Naive thymus-derived CD4-positive, alpha-beta T cell (primary cell): ENCODE measurements at regions of chr3 and their contacts with region 1.

Region 1: GRCh38 chr3:4409415-4409814 is 57.7 kb downstream of the SUMF1 start:
- DNase-seq: peak in 1 of 9 donors; percentile 26
- ATAC-seq: no peak
- H3K4me3 ChIP-seq: no peak overlapping the region
- H3K4me3 Mint-ChIP-seq: peak overlapping the region in 1 of 10 donors; percentile 65
- H3K27ac ChIP-seq: no peak overlapping the region
- H3K27ac Mint-ChIP-seq: peak overlapping the region in 2 of 9 donors; percentile 29 to 80
- H3K4me1 ChIP-seq: no peaks in the 10 kb centered on the region
- H3K4me1 Mint-ChIP-seq: peaks cover 0 to 33% (median 5%) of the 10 kb centered on the region in 7 donors
- H3K27me3 ChIP-seq: no peaks in the 10 kb centered on the region
- H3K27me3 Mint-ChIP-seq: no peaks in the 10 kb centered on the region

Region 2: DNA sequence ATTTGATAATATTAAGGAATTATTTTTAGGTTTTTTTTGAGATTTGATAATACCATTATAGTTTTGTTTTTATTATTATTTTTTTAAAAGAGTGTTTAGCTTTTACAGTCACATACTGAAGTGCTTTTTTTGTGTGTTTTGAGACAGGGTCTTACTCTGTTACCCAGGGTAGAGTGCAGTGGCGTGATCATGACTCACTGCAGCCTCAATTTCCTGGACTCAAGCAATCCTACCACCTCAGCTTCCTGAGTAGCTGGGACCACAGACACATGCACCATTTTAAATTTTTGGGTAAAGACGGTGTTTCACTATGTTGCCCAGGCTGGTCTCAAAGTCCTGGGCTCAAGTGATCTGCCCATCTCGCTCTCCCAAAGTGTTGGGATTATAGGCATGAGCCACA is 15.4 kb before region 1 on chr3:
- CTCF ChIA-PET with region 1: no interaction called
- POLR2A ChIA-PET with region 1: no interaction called
- intact Hi-C with region 1: loop called in 1 of 2 experiments (anchors 2 kb)
- DNase-seq: peak in 1 of 9 donors; percentile 29
- ATAC-seq: peak; percentile 57
- H3K4me3 ChIP-seq: no peak overlapping the region
- H3K4me3 Mint-ChIP-seq: peak overlapping the region in 2 of 10 donors; percentile 13 to 45
- H3K27ac ChIP-seq: no peak overlapping the region
- H3K27ac Mint-ChIP-seq: peak overlapping the region in 1 of 9 donors; percentile 84
- H3K4me1 ChIP-seq: peaks cover 0 to 9% of the 10 kb centered on the region in 2 donors
- H3K4me1 Mint-ChIP-seq: peaks cover 0 to 43% (median 6%) of the 10 kb centered on the region in 7 donors
- H3K27me3 ChIP-seq: no peaks in the 10 kb centered on the region
- H3K27me3 Mint-ChIP-seq: no peaks in the 10 kb centered on the region